ENCODE measurements at regions of chr18 and their contacts with region 1.

Region 1: DNA sequence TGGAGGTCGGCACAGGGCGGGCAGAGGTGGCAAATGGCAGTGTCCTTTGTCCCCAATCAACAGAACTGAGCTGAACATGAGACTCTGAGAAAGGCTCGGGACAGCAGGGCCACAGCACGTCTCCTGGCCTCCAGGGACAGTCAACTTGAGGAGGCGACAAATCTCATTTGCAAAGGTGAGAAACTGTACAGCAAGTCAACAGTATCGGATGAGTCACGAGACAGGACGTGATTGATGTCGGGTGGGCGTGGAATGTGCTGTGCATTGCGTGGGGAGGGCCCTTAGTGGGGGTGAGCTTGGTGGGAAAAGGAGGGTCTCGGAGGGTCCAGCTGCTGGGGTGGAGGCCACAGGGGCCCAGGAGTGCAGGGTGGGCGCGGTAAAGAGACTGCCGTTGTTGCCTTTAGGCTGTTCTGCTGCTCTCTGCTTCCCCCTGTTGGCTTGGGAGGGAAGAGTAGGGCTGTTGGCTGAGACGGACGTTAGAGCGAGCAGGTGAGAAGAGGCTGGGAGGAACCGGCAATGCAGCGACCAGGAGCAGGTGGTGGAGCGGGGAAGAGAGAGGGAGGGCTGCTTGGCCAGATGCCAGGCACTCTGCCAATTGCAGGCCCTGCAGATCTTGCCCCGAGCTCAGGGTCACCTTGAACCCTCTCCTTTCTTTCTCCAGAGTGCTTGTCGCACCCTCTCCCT is 164.3 kb downstream of the BCL2 start:
- DNase-seq: peak; percentile 66 to 92 (median 78)
- ATAC-seq: peak; percentile 75
- H3K4me3 ChIP-seq: peak overlapping the region; percentile 46 to 53
- H3K4me3 Mint-ChIP-seq: peak overlapping the region; percentile 83
- H3K27ac ChIP-seq: peak overlapping the region; percentile 48 to 99
- H3K27ac Mint-ChIP-seq: peak overlapping the region; percentile 98
- H3K4me1 ChIP-seq: peaks cover 94% of the 10 kb centered on the region
- H3K4me1 Mint-ChIP-seq: peaks cover 99% of the 10 kb centered on the region
- H3K27me3 ChIP-seq: no peaks in the 10 kb centered on the region
- H3K27me3 Mint-ChIP-seq: no peaks in the 10 kb centered on the region
- CTCF ChIP-seq: peak; percentile 79

Region 2: GRCh38 chr18:61261870-61262269 is 1893.4 kb before region 1 on chr18:
- CTCF ChIA-PET with region 1: no interaction called
- POLR2A ChIA-PET with region 1: no interaction called
- intact Hi-C with region 1: no loop called
- DNase-seq: no peak
- ATAC-seq: no peak
- H3K4me3 ChIP-seq: no peak overlapping the region
- H3K4me3 Mint-ChIP-seq: no peak overlapping the region
- H3K27ac ChIP-seq: no peak overlapping the region
- H3K27ac Mint-ChIP-seq: no peak overlapping the region
- H3K4me1 ChIP-seq: no peaks in the 10 kb centered on the region
- H3K4me1 Mint-ChIP-seq: no peaks in the 10 kb centered on the region
- H3K27me3 ChIP-seq: no peaks in the 10 kb centered on the region
- H3K27me3 Mint-ChIP-seq: no peaks in the 10 kb centered on the region
- CTCF ChIP-seq: no peak

Region 3: DNA sequence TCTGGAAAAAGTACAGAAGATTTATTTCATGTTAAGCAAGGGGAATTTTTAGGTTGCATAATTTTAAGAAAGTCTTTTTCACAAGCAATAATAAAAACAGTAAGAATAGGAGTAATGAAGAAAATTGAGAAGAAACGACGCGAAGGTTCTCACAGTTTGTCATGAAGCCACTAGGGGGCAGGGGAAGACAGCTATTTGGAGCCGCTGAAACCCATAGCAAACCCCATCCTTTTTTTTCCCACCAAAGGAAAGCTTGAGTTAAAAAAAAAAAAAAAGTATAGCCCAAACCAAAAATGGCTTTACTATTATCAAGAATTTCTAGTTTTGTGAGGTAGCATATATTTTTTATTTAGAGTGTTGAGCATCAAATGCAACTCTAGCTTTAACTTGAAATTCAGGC is 139.0 kb before region 1 on chr18:
- CTCF ChIA-PET with region 1: interaction called, 8 read pairs
- POLR2A ChIA-PET with region 1: no interaction called
- intact Hi-C with region 1: loop called in 1 of 2 experiments (anchors 1 kb)
- DNase-seq: peak; percentile 11 to 79 (median 51)
- ATAC-seq: peak; percentile 77
- H3K4me3 ChIP-seq: no peak overlapping the region
- H3K4me3 Mint-ChIP-seq: no peak overlapping the region
- H3K27ac ChIP-seq: no peak overlapping the region
- H3K27ac Mint-ChIP-seq: no peak overlapping the region
- H3K4me1 ChIP-seq: no peaks in the 10 kb centered on the region
- H3K4me1 Mint-ChIP-seq: no peaks in the 10 kb centered on the region
- H3K27me3 ChIP-seq: no peaks in the 10 kb centered on the region
- H3K27me3 Mint-ChIP-seq: peaks cover 16% of the 10 kb centered on the region
- CTCF ChIP-seq: peak; percentile 90

Region 4: GRCh38 chr18:63131106-63131958 is 24.0 kb before region 1 on chr18:
- CTCF ChIA-PET with region 1: interaction called, 88 read pairs
- POLR2A ChIA-PET with region 1: interaction called, 4 read pairs
- intact Hi-C with region 1: loop called (anchors 1 to 2 kb)
- DNase-seq: peak; percentile 32 to 78 (median 63)
- ATAC-seq: peak; percentile 76
- H3K4me3 ChIP-seq: no peak overlapping the region
- H3K4me3 Mint-ChIP-seq: no peak overlapping the region
- H3K27ac ChIP-seq: no peak overlapping the region
- H3K27ac Mint-ChIP-seq: peak overlapping the region; percentile 77
- H3K4me1 ChIP-seq: peaks cover 31% of the 10 kb centered on the region
- H3K4me1 Mint-ChIP-seq: peaks cover 30% of the 10 kb centered on the region
- H3K27me3 ChIP-seq: no peaks in the 10 kb centered on the region
- H3K27me3 Mint-ChIP-seq: no peaks in the 10 kb centered on the region
- CTCF ChIP-seq: peak; percentile 71

Region 5: DNA sequence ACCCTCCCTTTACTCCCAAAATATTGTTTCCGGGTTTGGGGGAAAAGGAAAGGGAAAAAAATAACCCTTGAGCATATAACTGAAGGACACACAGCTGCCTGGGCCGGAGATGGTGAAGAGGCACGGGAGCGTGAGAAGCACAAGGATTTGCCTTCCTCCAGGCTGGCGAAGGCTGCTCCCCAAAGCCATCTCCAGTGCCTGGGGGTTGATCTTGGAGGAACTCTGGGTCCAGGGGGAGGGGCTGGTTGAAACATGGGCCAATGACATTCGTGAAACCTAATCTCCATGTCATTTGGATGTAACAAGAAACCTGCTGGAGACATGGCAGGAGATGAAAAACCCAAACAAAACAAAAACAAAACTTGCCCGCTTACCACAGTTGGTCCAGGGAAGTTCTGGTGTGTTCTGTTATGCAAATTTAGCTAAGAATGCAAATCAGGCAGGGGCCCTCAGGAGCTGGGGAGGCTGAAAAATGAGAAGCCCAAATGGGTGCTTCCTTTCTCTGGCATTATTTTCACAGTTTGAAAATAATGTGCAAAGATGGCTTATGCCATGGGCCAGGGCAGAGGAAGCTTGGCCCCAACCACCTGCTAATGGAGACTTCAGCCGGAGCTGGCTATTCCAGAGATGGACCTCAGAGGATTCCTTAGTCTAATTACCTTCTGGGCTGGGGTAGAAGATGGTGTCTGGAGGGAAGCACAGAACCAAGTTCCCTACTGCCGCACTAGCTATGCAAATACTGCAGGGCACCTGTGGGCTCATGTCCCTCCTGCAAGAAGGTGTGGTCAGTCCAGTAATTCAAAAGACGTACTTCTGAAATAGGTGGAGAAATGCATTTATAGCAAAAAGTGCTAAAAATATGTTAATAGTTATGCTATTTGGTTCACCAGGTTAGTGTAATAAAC is 16.6 kb before region 1 on chr18:
- CTCF ChIA-PET with region 1: interaction called, 88 read pairs
- POLR2A ChIA-PET with region 1: interaction called, 11 read pairs
- intact Hi-C with region 1: loop called in 1 of 2 experiments (anchors 1 kb)
- DNase-seq: peak in 1 of 9 experiments; percentile 15
- ATAC-seq: peak; percentile 14
- H3K4me3 ChIP-seq: peak overlapping the region; percentile 29 to 35
- H3K4me3 Mint-ChIP-seq: peak overlapping the region; percentile 88
- H3K27ac ChIP-seq: peak overlapping the region; percentile 4 to 56
- H3K27ac Mint-ChIP-seq: peak overlapping the region; percentile 93
- H3K4me1 ChIP-seq: peaks cover 46% of the 10 kb centered on the region
- H3K4me1 Mint-ChIP-seq: peaks cover 50% of the 10 kb centered on the region
- H3K27me3 ChIP-seq: no peaks in the 10 kb centered on the region
- H3K27me3 Mint-ChIP-seq: no peaks in the 10 kb centered on the region
- CTCF ChIP-seq: no peak

Region 6: GRCh38 chr18:63199743-63200241 is 44.5 kb after region 1 on chr18:
- CTCF ChIA-PET with region 1: interaction called, 5 read pairs
- POLR2A ChIA-PET with region 1: no interaction called
- intact Hi-C with region 1: loop called in 1 of 2 experiments (anchors 1 kb)
- DNase-seq: peak in 6 of 9 experiments; percentile 35 to 70 (median 56)
- ATAC-seq: peak; percentile 67
- H3K4me3 ChIP-seq: peak overlapping the region; percentile 54 to 70
- H3K4me3 Mint-ChIP-seq: no peak overlapping the region
- H3K27ac ChIP-seq: peak overlapping the region; percentile 60 to 72
- H3K27ac Mint-ChIP-seq: no peak overlapping the region
- H3K4me1 ChIP-seq: peaks cover 68% of the 10 kb centered on the region
- H3K4me1 Mint-ChIP-seq: peaks cover 39% of the 10 kb centered on the region
- H3K27me3 ChIP-seq: no peaks in the 10 kb centered on the region
- H3K27me3 Mint-ChIP-seq: no peaks in the 10 kb centered on the region
- CTCF ChIP-seq: no peak

Region 7: DNA sequence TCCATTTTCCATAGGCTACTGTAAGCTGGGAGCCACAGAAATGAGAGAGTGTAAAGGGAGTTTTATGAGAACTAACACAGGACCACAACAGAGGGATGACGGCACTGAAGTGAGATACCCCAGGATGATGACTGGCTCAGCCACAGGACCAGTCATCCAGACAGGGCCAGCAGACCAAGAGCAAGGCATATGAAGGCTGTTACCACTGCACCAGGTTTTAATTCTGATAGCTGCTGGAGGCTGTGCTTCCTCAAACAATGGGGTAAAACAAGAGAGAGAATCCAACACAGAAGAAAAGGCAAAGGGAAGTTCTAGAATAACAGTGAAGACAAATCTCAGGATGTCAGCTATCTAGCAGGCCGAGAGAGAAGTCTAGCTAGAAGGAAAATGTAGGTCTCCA is 69.3 kb after region 1 on chr18:
- CTCF ChIA-PET with region 1: interaction called, 3 read pairs
- POLR2A ChIA-PET with region 1: interaction called, 7 read pairs
- intact Hi-C with region 1: loop called in 1 of 2 experiments (anchors 2 kb)
- DNase-seq: peak in 5 of 9 experiments; percentile 34 to 47 (median 38)
- ATAC-seq: peak; percentile 78
- H3K4me3 ChIP-seq: peak overlapping the region in 1 of 2 experiments; percentile 10
- H3K4me3 Mint-ChIP-seq: peak overlapping the region; percentile 20
- H3K27ac ChIP-seq: peak overlapping the region; percentile 17 to 25
- H3K27ac Mint-ChIP-seq: peak overlapping the region; percentile 84
- H3K4me1 ChIP-seq: peaks cover 75% of the 10 kb centered on the region
- H3K4me1 Mint-ChIP-seq: peaks cover 70% of the 10 kb centered on the region
- H3K27me3 ChIP-seq: no peaks in the 10 kb centered on the region
- H3K27me3 Mint-ChIP-seq: no peaks in the 10 kb centered on the region
- CTCF ChIP-seq: no peak

Region 8: DNA sequence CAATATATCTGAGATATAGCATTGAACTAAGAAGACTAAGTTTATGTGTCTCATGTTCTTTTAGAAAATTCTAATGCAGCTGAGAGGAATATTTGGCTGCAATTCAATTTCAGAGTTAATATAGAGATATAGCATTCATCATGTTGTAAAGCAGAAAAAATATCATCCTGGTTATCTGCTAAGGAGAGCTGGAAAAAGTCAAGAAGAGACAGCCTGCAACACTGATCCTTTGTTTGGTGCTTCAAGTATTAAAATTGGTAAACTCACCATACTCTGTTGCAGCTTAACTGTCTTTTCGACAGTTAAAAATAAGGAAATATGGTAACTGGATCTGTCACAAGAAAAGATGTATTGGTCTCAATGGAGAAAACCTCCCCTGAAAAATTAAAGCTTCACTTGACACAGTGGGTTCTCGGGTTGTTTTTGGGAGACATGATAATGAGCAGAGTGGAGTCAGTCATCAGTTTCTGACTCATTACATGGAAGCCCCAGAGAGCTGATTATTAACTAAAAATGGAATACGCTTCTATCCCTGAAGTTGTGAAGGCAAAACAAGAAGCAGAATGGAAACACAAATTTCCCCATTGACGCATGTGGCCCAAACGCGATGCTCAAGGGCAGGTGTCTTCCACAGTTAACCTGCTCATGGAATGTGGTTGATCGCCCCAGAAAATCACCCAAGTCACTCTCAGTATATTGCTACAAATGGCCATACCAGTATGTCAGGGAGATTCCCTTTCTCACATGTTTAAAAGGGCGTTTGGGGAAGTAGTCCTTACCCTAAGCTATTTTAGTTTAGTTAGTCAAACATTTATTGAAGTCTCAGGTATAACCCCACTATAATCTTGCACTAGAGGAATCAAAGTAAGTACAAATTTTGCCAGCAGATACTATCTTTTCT is 156.1 kb after region 1 on chr18:
- CTCF ChIA-PET with region 1: interaction called, 16 read pairs
- POLR2A ChIA-PET with region 1: interaction called, 5 read pairs
- intact Hi-C with region 1: no loop called
- DNase-seq: no peak
- ATAC-seq: no peak
- H3K4me3 ChIP-seq: no peak overlapping the region
- H3K4me3 Mint-ChIP-seq: no peak overlapping the region
- H3K27ac ChIP-seq: no peak overlapping the region
- H3K27ac Mint-ChIP-seq: peak overlapping the region; percentile 90
- H3K4me1 ChIP-seq: peaks cover 84% of the 10 kb centered on the region
- H3K4me1 Mint-ChIP-seq: peaks cover 87% of the 10 kb centered on the region
- H3K27me3 ChIP-seq: no peaks in the 10 kb centered on the region
- H3K27me3 Mint-ChIP-seq: no peaks in the 10 kb centered on the region
- CTCF ChIP-seq: no peak

Measured in CD8-positive, alpha-beta T cell (primary cell).